ENCODE measurements at regions of chr18 and their contacts with region 1.

Region 1: GRCh38 chr18:45690975-45691815 is 32.8 kb upstream of the SLC14A1 start:
- DNase-seq: peak; percentile 87
- H3K4me3 ChIP-seq: no peak overlapping the region
- H3K27ac ChIP-seq: no peak overlapping the region
- H3K4me1 ChIP-seq: peaks cover 4% of the 10 kb centered on the region
- H3K27me3 ChIP-seq: no peaks in the 10 kb centered on the region
- CTCF ChIP-seq: peak; percentile 54 to 71 (median 69)
- POLR2A ChIP-seq: no peak

Region 2: DNA sequence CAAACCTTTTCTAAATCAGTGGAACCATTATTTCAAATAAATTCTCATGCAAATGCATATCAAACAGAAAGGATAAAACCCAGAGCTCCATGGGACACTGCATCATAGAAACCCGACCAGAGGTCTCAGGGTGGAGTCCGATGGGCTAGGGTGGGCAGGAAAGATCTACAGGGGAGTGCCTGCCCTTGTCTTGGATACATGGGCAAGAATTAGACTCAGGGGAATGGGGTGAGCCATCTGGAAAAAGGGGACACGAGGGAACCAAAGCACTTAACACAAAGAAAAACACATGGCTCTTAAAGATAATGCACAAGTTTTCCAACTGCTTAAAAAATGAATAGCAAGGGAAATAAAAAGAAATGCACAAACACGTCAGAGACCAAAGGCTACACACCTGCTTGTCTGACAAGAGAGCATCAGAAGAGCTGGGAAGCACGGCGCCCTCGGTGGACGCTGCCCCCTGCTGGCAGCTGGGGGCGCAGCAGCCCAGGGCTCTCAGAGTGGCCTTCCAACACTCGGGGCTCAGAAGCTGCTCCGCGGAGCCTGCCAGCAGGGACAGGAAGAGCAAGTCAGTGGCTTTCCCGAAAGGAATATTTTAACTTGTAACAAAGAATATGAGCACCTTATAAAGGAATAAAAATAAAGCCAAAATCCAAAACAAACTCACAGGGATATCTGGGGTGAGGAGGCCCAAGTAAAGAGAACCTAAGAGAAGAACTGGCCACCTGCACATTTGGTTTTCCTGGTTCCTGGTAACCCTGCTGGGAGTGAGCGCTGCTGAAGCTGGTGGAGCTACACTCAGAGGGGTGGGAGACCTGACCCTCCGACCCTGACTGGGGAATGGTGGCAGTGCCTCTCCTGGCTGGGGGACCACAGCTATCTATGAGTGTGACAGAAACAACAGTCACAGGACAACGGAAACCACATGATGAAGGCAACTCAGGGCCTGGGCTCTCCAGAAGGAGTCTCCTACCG is 188.8 kb after region 1 on chr18:
- intact Hi-C with region 1: loop called (anchors 10 kb)
- DNase-seq: peak; percentile 75
- H3K4me3 ChIP-seq: no peak overlapping the region
- H3K27ac ChIP-seq: no peak overlapping the region
- H3K4me1 ChIP-seq: no peaks in the 10 kb centered on the region
- H3K27me3 ChIP-seq: no peaks in the 10 kb centered on the region
- CTCF ChIP-seq: peak; percentile 74 to 98 (median 80)
- POLR2A ChIP-seq: no peak

Region 3: DNA sequence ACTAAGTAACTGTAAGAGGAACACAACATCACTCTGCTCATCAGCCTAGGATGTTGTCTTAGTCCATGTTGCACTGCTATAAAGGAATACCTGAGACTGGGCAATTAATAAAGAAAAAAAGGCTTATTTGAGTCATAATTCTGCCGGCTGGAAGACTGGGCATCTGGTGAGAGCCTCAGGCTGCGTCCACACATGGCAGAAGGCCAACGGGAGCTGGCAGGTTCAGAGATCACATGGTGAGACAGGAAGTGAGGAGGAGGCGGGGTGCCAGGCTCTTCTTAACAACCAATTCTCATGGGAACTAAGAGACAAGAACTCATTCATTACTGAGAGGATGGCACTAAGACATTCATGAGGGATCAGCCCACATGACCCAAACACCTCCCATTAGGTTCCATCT is 229.2 kb after region 1 on chr18:
- intact Hi-C with region 1: no loop called
- DNase-seq: peak; percentile 78
- H3K4me3 ChIP-seq: no peak overlapping the region
- H3K27ac ChIP-seq: no peak overlapping the region
- H3K4me1 ChIP-seq: no peaks in the 10 kb centered on the region
- H3K27me3 ChIP-seq: no peaks in the 10 kb centered on the region
- CTCF ChIP-seq: no peak
- POLR2A ChIP-seq: no peak

Region 4: GRCh38 chr18:45993389-45993788 is 302.2 kb after region 1 on chr18:
- intact Hi-C with region 1: no loop called
- DNase-seq: no peak
- H3K4me3 ChIP-seq: no peak overlapping the region
- H3K27ac ChIP-seq: no peak overlapping the region
- H3K4me1 ChIP-seq: no peaks in the 10 kb centered on the region
- H3K27me3 ChIP-seq: no peaks in the 10 kb centered on the region
- CTCF ChIP-seq: no peak
- POLR2A ChIP-seq: no peak

Region 5: GRCh38 chr18:46084431-46084830 is 393.2 kb after region 1 on chr18:
- intact Hi-C with region 1: no loop called
- DNase-seq: no peak
- H3K4me3 ChIP-seq: no peak overlapping the region
- H3K27ac ChIP-seq: no peak overlapping the region
- H3K4me1 ChIP-seq: peaks cover 3% of the 10 kb centered on the region
- H3K27me3 ChIP-seq: no peaks in the 10 kb centered on the region
- CTCF ChIP-seq: no peak
- POLR2A ChIP-seq: no peak

Measured in testis (tissue), 5 donors.